ENCODE measurements at regions of chr17 and their contacts with region 1.

Region 1: GRCh38 chr17:2054512-2055291 is at the start of gene HIC1:
- DNase-seq: peak; percentile 87

Region 2: GRCh38 chr17:2244545-2245525 is 190.1 kb after region 1 on chr17:
- in situ Hi-C with region 1: loop called (anchors 25 kb)
- DNase-seq: peak; percentile 78